AG04450 (cell line): ENCODE measurements at regions of chr11 and their contacts with region 1.

Region 1: DNA sequence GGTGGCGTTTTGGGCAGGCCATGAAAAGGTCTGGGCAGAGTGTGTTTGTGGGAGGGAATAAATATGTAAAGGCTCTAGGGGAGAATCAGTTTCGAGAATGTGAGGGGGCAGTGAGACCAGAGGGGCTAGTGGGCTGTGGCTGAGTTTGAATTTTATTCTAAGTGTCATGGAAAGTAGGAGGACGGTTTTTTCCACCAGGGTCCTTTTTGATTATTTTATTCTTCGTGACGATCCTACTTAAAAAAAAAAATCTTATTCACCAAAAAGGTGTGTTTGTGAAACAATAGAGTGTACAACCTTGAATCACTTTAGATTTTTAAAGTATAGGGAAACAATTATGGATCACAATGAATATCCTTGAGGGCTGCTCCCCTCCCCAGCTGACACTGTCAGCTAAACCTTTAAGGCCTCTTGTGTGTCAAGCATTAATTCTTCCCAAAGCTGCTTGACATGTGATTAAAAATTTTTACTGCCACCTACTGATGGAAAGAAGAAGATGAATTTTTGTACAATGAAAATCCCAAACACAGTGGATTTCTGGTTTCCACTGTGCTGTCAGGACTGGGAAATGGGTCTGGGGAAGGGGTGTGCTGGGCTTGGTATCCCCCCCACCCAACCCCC is 107.5 kb upstream of the OR4B1 start:
- DNase-seq: no peak
- H3K4me3 ChIP-seq: no peak overlapping the region
- H3K27ac ChIP-seq: no peak overlapping the region
- H3K27me3 ChIP-seq: no peaks in the 10 kb centered on the region
- CTCF ChIP-seq: peak; percentile 51

Region 2: DNA sequence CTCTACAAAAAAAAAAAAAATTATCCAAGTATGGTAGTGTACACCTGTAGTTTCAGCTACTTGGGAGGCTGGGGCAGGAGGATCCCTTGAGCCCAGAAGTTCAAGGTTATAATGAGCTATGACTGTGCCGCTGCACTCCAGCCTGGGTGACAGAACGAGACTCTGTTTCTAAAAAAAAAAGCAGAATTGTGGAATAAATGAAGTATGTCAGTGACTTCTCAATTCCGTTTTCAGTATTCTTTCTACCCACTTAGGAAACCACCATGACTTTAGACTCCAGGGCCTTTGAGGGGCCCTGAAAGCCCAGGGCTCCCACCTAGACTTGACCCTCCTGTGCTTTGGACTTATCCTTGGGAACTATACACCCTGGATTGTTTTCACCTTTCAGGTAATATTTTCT is 254.5 kb before region 1 on chr11:
- CTCF ChIA-PET with region 1: interaction called, 15 read pairs
- POLR2A ChIA-PET with region 1: interaction called, 3 read pairs
- DNase-seq: no peak
- H3K4me3 ChIP-seq: no peak overlapping the region
- H3K27ac ChIP-seq: no peak overlapping the region
- H3K27me3 ChIP-seq: no peaks in the 10 kb centered on the region
- CTCF ChIP-seq: no peak

Region 3: DNA sequence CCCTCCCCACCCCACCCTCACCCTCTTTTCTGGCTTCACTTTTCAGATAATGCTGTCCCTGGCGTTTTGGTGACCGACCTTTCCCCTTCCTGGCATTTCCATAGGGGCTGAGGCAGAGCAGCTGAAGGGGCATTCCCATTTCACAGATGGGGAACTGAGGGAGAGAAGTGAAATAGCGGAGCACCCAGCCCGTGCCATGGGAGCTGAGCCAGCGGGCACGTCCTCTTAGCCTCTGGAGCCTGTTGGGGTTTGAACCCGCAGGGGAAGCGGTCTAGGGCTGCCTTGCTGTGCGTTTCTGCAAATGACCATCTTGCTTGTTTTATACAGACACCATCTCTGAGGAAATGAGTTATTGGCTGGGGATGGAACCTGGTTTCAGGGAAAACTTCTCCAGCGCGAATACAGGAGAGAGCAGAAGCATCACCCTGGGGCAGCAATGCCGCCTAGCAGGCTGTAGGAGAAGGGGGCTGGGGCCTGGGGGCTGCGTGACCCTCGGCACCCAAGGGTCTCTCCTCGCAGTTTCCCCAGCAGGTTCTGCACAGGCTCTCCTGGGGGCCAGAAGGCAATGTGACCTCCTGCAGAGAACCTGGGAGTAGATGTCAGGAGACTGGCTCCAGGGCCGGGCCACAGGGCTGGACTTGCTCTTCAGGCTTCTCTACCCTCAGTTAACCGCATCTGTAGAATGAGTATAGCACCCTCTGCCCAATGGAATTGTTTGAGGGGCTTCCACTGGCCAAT is 127.3 kb before region 1 on chr11:
- CTCF ChIA-PET with region 1: interaction called, 20 read pairs
- POLR2A ChIA-PET with region 1: no interaction called
- DNase-seq: no peak
- H3K4me3 ChIP-seq: peak overlapping the region; percentile 64
- H3K27ac ChIP-seq: no peak overlapping the region
- H3K27me3 ChIP-seq: no peaks in the 10 kb centered on the region
- CTCF ChIP-seq: no peak